GM10248 (cell line): ENCODE measurements at regions of chr1 and their contacts with region 1.

Region 1: GRCh38 chr1:186297439-186298112 is 77.5 kb downstream of the TPR start:
- DNase-seq: no peak
- CTCF ChIP-seq: no peak

Region 2: DNA sequence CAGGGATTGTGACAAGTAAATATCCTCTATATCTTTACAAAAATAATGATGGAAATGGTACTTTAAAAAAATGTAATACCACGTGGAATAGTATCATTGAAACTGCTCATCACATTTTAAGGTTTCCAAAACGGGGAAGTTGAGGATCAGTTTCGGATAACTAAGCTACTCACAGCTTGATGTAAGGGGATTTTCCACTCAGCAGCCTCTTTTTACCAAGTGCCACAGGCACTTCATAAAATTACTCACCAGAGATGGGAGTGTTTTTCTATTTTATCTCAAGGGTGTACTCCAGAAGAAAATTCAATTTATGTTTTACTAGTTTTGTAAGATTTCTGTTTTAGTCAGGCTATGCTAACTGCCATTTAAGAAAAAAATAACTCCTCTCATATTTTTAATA is 14.2 kb before region 1 on chr1:
- CTCF ChIA-PET with region 1: interaction called, 11 read pairs
- POLR2A ChIA-PET with region 1: no interaction called
- DNase-seq: peak; percentile 35
- CTCF ChIP-seq: no peak

Region 3: GRCh38 chr1:186473047-186473446 is 175.5 kb after region 1 on chr1:
- CTCF ChIA-PET with region 1: no interaction called
- POLR2A ChIA-PET with region 1: no interaction called
- DNase-seq: no peak
- CTCF ChIP-seq: no peak